Activated CD4-positive, alpha-beta memory T cell treated with anti-CD3 and anti-CD28 coated beads for 36 hours (primary cell): ENCODE measurements at regions of chr11 and their contacts with region 1.

Region 1: DNA sequence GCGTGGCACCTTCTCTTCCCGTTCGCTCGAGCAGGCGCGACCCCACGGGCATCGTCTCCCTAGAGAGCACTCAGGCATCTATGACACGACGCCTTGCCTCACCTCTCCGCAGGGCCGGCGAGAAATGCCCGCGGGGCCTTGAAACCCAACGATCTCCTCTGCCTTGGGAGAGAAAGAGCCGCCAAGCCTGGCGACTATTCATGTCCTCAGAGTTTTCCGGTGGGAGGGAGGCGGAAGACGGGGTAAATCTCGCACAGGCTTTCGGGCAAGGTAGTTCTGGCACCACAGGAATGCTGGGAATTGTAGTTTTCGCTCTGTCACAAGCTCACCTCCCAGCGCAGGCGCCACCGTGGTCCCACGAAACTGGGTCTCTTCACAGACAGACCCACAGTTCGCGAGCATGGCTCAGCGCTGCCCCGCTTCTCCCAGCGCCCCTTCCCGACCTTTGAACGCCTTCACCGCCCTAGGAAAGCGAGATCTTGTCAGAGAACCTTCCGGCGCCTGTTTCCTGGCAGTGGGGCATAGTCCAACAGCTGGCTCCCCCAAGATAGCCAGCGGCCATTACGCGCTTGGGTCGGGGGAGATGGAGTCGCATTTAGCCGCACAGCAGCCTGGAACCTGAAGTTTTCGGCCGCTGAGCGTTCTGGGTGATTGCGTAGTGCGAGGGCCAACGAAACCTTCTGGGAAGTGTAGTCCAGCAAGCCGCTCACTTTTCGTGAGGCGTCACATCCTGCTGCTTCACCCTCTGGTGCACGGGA is at the start of gene CCDC90B:
- DNase-seq: peak; percentile 96
- H3K4me3 Mint-ChIP-seq: peak within 1 kb of the TSS; percentile 92
- H3K27ac Mint-ChIP-seq: peak within 1 kb of the TSS; percentile 99
- H3K4me1 Mint-ChIP-seq: peaks cover 35% of the 10 kb centered on the region
- H3K27me3 Mint-ChIP-seq: no peaks in the 10 kb centered on the region
- total RNA-seq, gene CCDC90B: 29.2 to 32.3 TPM

Region 2: GRCh38 chr11:83079820-83080219 is 206.1 kb before region 1 on chr11:
- CTCF ChIA-PET with region 1: no interaction called
- POLR2A ChIA-PET with region 1: no interaction called
- intact Hi-C with region 1: no loop called
- DNase-seq: no peak
- H3K4me3 Mint-ChIP-seq: no peak overlapping the region
- H3K27ac Mint-ChIP-seq: no peak overlapping the region
- H3K4me1 Mint-ChIP-seq: peaks cover 14% of the 10 kb centered on the region
- H3K27me3 Mint-ChIP-seq: no peaks in the 10 kb centered on the region

Region 3: DNA sequence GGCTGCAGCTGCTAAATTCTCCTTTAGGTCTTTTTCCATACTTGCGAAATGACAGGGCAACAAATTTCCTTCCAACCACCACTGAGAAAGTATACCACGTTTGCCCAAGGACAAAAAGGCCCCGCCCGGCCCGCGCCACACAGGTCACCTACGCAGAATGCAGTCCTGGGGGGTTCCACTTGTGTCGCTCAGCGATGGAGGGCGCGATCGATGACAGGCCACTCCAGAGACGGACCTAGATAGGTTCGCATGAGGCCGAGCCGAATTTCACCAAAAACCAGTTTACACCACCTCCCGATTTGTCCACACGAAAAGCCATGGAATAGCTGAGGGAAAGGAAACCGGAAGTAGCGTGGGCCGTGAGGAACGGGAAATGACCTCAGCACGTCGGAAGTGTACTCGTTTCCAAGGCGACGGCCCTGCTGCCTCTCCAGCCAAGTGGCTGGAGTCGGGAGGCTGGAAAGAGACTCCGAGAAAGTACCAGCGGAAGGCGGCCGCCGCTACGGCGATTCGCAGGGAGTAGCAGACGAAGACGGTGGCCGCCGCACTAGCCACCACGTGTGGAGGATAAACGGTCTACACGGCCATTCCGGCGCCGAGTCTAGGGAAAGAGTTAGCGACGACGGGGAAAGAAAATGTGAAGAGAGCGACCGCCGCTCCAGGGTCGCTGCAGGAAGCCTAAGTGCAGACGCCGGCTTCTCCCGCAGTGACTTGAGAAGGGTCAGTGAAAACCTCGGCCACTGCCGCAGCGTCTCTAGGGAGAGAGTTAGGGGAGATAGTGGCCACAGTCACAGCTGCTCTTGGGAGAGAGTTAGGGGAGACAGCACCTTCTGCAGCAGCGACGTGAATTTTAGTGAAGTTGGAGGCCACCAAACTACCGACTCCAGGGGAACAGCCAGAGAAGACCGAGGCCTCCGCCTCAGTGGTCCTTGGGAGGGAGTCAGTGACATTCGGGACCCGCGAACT is 92.4 kb before region 1 on chr11 and contains the start of gene ANKRD42:
- CTCF ChIA-PET with region 1: interaction called, 3 read pairs
- POLR2A ChIA-PET with region 1: no interaction called
- intact Hi-C with region 1: loop called (anchors 1 kb)
- DNase-seq: peak; percentile 93
- H3K4me3 Mint-ChIP-seq: peak within 1 kb of the TSS; percentile 99
- H3K27ac Mint-ChIP-seq: peak within 1 kb of the TSS; percentile 98
- H3K4me1 Mint-ChIP-seq: peaks cover 38% of the 10 kb centered on the region
- H3K27me3 Mint-ChIP-seq: no peaks in the 10 kb centered on the region
- total RNA-seq, gene ANKRD42: 3.8 to 5.4 TPM

Region 4: DNA sequence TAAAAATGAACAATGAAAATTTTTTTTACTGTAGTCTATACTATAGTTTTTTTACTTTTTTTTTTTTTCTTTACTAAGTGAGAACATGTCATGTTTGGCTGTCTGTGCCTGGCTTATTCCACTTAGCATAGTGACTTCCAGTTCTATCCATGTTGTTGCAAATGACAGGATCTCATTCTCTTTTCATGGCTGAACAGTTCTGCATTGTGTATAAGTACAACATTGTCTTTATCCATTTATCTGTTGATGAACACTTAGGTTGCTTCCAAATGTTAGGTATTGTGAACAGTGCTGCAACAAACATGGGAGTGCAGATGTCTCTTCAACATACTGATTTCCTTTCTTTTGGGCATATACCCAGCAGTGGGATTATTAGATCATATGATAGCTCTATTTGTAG is 88.4 kb after region 1 on chr11:
- CTCF ChIA-PET with region 1: no interaction called
- POLR2A ChIA-PET with region 1: no interaction called
- intact Hi-C with region 1: no loop called
- DNase-seq: no peak
- H3K4me3 Mint-ChIP-seq: no peak overlapping the region
- H3K27ac Mint-ChIP-seq: no peak overlapping the region
- H3K4me1 Mint-ChIP-seq: no peaks in the 10 kb centered on the region
- H3K27me3 Mint-ChIP-seq: peaks cover 8% of the 10 kb centered on the region

Region 5: DNA sequence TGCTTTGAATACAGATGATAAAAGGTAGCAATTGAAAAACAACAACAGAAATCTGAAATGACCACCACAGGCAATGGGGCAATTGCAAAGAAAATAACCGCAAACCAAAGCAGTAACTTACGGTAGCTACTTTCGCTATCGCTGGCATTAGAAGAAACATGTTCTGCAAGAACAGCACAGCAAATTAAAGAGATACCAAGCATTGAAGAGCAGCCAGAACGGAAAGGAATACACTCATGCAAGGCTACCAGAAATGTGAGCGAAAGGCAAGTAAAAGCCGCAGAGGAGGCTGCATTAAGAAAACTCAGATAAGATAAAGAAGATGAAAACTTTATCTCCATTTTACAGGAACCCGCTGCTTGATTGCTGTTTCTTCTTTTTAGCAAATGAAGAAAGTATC is 194.3 kb after region 1 on chr11:
- CTCF ChIA-PET with region 1: no interaction called
- POLR2A ChIA-PET with region 1: no interaction called
- intact Hi-C with region 1: no loop called
- DNase-seq: no peak
- H3K4me3 Mint-ChIP-seq: no peak overlapping the region
- H3K27ac Mint-ChIP-seq: no peak overlapping the region
- H3K4me1 Mint-ChIP-seq: no peaks in the 10 kb centered on the region
- H3K27me3 Mint-ChIP-seq: no peaks in the 10 kb centered on the region